ENCODE measurements at regions of chr17 and their contacts with region 1.

Region 1: DNA sequence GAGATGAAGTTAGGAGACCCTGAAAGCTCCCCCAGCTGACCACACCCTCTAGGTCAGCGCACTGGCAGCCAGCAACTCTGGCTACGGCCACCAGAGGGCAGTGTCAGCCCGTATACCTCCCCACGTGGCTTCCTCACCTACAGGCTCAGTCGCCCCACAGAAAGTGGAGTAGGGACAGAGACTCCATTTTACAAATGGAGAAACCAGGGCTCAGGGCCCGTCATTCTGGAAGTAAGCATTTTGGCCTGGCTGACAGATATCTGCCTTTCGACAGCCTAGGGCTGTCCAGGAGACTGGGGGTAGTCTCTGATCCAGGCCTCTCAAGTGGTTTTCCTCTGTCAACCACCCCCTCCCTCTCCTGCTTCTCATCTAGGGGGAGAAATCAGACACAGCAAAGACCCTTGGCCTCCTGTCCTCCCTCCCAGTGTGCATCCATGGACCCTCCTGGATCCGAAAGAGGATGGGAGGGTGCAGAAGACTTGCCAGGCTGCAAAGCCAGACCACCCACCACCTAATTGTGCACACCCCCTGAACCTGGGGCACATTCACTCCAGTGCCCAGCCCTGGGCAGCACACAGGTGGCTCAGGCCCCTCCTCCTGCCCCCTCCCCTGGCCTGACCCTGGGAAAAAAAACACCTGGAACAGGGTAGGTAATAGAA is 3.8 kb upstream of the HAP1 start:
- DNase-seq: peak; percentile 92
- H3K4me3 ChIP-seq: peak overlapping the region in 1 of 2 experiments; percentile 1; a peak in 1 of 4 replicates
- H3K27ac ChIP-seq: no peak overlapping the region
- H3K4me1 ChIP-seq: peaks cover 0 to 15% of the 10 kb centered on the region in 2 experiments; a peak in 1 of 4 replicates
- H3K27me3 ChIP-seq: peaks cover 40% of the 10 kb centered on the region
- CTCF ChIP-seq: peak; percentile 96
- EP300 ChIP-seq: no peak
- RAD21 ChIP-seq: peak; percentile 98

Region 2: DNA sequence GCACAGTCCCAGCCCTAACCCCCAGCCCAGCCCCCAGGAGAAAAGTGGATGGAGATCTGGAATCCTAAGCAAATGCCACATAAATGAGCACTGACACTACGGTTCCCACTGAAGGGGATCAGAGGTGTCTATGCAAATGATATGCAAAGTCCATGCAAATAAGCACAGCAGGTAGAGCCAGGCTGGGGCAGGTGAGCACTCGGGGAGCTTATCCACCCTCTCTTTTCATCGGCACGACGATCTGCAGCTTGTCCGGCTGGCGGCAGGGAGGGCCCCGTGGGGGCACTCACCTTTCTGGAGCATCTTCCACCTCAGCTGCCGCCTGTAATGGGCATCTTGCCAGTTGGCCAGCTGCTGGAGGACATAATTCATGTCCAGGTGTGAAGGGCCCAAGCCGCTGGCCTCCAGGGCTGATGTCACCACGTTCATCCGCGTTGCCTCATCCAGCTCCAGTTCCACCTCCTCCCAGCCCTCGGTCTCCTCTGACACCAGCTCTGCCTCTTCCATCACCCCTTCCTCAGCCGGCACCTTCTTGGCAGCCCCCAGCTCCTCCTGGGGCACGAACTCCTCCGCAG is 13.6 kb before region 1 on chr17:
- CTCF ChIA-PET with region 1: interaction called, 17 read pairs
- POLR2A ChIA-PET with region 1: no interaction called
- DNase-seq: no peak
- H3K4me3 ChIP-seq: no peak overlapping the region
- H3K27ac ChIP-seq: no peak overlapping the region
- H3K4me1 ChIP-seq: no peaks in the 10 kb centered on the region
- H3K27me3 ChIP-seq: no peaks in the 10 kb centered on the region
- CTCF ChIP-seq: no peak
- EP300 ChIP-seq: no peak
- RAD21 ChIP-seq: no peak

Region 3: DNA sequence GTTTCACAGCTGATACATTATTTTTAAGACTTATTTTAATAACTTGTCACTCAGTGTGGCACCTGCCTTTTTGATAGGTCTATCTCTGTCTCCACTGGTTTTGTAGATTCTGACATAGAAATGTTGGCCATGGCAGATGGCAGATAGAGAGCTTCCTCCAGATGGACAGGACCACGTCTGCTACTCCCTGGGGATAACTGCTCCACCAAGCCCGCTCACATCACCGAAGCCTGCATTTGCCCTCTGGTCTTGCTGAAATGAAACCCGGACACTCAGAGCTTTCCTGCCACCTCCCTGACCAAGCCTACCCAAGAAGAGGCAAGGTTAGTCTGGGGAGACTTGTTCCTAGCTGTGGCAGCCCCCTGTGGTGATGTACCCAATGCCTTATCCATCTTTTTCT is 12.7 kb after region 1 on chr17:
- CTCF ChIA-PET with region 1: interaction called, 24 read pairs
- POLR2A ChIA-PET with region 1: no interaction called
- DNase-seq: no peak
- H3K4me3 ChIP-seq: no peak overlapping the region
- H3K27ac ChIP-seq: no peak overlapping the region
- H3K4me1 ChIP-seq: no peaks in the 10 kb centered on the region; a peak in 1 of 4 replicates
- H3K27me3 ChIP-seq: no peaks in the 10 kb centered on the region
- CTCF ChIP-seq: no peak
- EP300 ChIP-seq: no peak
- RAD21 ChIP-seq: no peak

Region 4: GRCh38 chr17:41786227-41787020 is 48.2 kb after region 1 on chr17 and contains the start of gene JUP:
- CTCF ChIA-PET with region 1: interaction called, 18 read pairs
- POLR2A ChIA-PET with region 1: interaction called, 5 read pairs
- DNase-seq: peak; percentile 99
- H3K4me3 ChIP-seq: peak within 1 kb of the TSS; percentile 64 to 66
- H3K27ac ChIP-seq: peak within 1 kb of the TSS in 1 of 2 experiments; percentile 17; a peak in 1 of 4 replicates
- H3K4me1 ChIP-seq: peaks cover 10 to 32% of the 10 kb centered on the region in 2 experiments; a peak in 2 of 4 replicates
- H3K27me3 ChIP-seq: no peaks in the 10 kb centered on the region
- CTCF ChIP-seq: peak; percentile 63
- EP300 ChIP-seq: no peak
- RAD21 ChIP-seq: no peak
- polyA plus RNA-seq, gene JUP: 9.3 and 13.0 TPM in 2 replicates

Region 5: DNA sequence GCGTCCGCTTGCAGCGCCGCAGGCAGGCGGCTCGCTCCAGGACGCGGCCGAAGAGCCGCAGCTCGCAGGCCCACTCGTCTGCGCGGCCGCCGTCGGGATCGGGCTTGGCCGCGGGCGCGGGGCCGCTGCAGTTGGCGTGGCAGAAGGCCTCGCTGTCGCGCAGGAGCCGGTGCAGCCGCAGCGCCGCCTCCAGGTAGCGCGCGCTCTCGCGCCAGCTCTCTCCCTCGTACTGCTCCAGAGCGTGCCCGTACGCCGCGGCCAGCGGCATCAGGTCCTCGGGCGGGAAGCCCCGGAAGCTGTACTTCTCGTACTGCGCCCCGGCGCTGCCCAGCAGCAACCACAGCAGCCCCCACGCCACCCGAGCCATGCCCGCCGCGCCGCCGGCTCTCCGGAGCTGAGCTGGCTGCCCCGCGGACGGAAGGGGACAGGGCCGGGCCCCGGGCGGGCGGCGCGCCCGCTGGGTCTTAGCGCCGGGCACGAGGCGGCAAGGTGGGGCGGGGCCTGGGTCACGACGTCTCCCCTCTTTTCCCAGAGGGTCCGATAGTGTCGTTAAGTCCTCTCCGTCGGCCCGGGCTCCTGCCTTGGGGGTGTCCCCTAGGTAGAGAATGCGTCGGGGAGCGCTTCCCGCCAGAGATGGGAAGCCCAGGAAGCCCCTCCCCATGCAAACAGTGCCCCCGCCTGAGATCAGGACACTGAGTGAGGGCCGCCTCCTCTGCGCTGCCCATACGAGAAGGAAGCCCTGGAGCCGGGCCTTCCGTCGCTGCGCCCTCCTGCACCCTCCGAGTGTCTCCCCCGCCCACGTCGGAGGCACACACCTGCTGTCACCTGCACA is 73.6 kb after region 1 on chr17 and contains the start of gene P3H4:
- CTCF ChIA-PET with region 1: interaction called, 405 read pairs
- POLR2A ChIA-PET with region 1: no interaction called
- DNase-seq: peak; percentile 94
- H3K4me3 ChIP-seq: peak within 1 kb of the TSS; percentile 75 to 93
- H3K27ac ChIP-seq: peak within 1 kb of the TSS; percentile 80 to 87
- H3K4me1 ChIP-seq: peaks cover 15 to 24% of the 10 kb centered on the region in 2 experiments; a peak in 2 of 4 replicates
- H3K27me3 ChIP-seq: no peaks in the 10 kb centered on the region
- CTCF ChIP-seq: peak; percentile 61
- EP300 ChIP-seq: peak in 1 of 2 experiments; percentile 12; a peak in 1 of 4 replicates
- RAD21 ChIP-seq: peak; percentile 44; the same call in 1 of the 2 replicates
- polyA plus RNA-seq, gene P3H4: 55.5 and 88.3 TPM in 2 replicates

Region 6: DNA sequence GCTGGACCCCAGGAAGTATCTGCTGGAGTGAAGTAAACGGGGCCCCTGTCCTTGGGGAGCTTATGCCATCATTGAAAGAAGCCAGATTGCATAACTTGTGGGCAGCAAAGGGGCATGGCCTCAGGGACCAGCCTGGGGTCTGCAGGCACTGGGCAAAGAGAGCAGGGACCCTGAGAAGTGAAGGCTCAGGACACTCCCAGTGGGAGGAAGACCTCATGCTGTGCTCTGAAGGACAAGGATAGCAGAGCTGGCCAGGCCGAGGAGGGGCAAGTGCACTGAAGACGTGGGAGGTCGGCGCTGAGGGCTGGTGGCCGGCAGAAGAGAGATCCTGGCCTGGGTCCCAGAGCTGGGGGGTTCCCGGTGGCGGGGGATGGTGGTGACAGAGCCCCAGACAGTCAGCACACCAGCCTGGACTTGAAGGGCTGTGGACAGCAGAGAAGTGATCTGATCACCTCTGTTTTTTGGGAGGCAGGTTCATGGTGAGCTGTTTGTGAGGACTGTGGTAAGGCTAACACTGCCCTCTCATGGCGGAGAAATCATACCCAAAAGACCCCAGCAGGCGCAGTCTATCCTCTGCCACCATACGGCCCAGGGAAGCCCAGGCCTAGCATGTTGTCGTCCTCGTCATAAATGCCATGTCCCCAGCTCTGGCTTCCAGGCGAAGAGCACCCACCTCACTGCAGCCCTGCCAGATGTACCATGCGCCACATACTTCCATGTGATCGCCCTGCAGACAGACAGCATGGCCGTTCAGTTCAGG is 221.3 kb after region 1 on chr17:
- CTCF ChIA-PET with region 1: interaction called, 18 read pairs
- POLR2A ChIA-PET with region 1: no interaction called
- DNase-seq: peak; percentile 73
- H3K4me3 ChIP-seq: no peak overlapping the region
- H3K27ac ChIP-seq: no peak overlapping the region; a peak in 1 of 4 replicates
- H3K4me1 ChIP-seq: peaks cover 0 to 11% of the 10 kb centered on the region in 2 experiments; a peak in 1 of 4 replicates
- H3K27me3 ChIP-seq: no peaks in the 10 kb centered on the region
- CTCF ChIP-seq: peak; percentile 52
- EP300 ChIP-seq: no peak
- RAD21 ChIP-seq: peak; percentile 75

Measured in SK-N-SH (cell line).